AG04450 (cell line): ENCODE measurements at regions of chr11 and their contacts with region 1.

Region 1: GRCh38 chr11:112219476-112220232 is 6.6 kb upstream of the PTS start:
- DNase-seq: peak; percentile 52
- H3K4me3 ChIP-seq: no peak overlapping the region
- H3K27ac ChIP-seq: no peak overlapping the region
- H3K27me3 ChIP-seq: no peaks in the 10 kb centered on the region
- CTCF ChIP-seq: peak; percentile 75

Region 2: GRCh38 chr11:112206071-112206470 is 13.6 kb before region 1 on chr11:
- CTCF ChIA-PET with region 1: interaction called, 12 read pairs
- POLR2A ChIA-PET with region 1: no interaction called
- DNase-seq: no peak
- H3K4me3 ChIP-seq: no peak overlapping the region
- H3K27ac ChIP-seq: no peak overlapping the region
- H3K27me3 ChIP-seq: no peaks in the 10 kb centered on the region
- CTCF ChIP-seq: no peak

Region 3: DNA sequence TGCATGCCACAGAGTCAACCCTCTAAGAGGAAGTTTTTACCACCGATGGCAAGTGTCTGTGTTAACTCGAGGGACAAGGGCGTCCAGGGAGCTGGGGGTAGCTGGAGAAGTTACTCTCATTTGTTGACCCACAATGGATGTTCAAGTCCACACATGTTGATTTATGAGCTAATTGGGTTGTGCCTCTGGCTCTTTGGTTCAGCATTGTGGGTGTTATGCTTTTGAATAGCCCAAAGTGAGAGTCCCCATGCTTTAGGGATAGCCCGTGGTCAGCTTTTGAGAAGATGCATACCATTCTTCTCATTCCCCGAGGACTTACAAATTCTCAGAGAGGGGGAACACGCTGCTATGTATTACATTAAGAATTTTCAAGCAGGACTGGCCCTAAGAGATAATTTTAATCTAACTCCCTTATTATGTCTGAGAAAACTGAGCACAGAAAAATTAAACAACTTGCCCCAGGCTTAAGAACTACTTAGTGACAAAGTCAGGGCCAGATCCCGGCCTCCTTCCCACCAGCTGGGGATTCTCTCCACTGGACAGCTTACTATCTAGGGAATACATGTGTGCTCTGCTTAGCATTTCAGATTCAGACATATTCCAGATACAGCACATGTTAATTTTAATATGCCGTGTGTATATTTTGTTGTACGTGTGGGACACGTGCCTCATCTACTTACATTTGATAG is 46.2 kb after region 1 on chr11:
- CTCF ChIA-PET with region 1: interaction called, 14 read pairs
- POLR2A ChIA-PET with region 1: no interaction called
- DNase-seq: no peak
- H3K4me3 ChIP-seq: no peak overlapping the region
- H3K27ac ChIP-seq: no peak overlapping the region
- H3K27me3 ChIP-seq: peaks cover under 1% of the 10 kb centered on the region
- CTCF ChIP-seq: no peak

Region 4: GRCh38 chr11:112321521-112322172 is 102.0 kb after region 1 on chr11:
- CTCF ChIA-PET with region 1: no interaction called
- POLR2A ChIA-PET with region 1: no interaction called
- DNase-seq: peak; percentile 61
- H3K4me3 ChIP-seq: no peak overlapping the region
- H3K27ac ChIP-seq: peak overlapping the region; percentile 65
- H3K27me3 ChIP-seq: no peaks in the 10 kb centered on the region
- CTCF ChIP-seq: no peak